ENCODE measurements at regions of chr20 and their contacts with region 1.

Region 1: GRCh38 chr20:25539742-25540672 is 45.3 kb downstream of the NINL start:
- DNase-seq: no peak
- H3K4me3 ChIP-seq: peak overlapping the region; percentile 15 to 47 (median 39)
- H3K27ac ChIP-seq: peak overlapping the region; percentile 32 to 76 (median 72)
- H3K4me1 ChIP-seq: peaks cover 0 to 39% (median 20%) of the 10 kb centered on the region in 4 donors
- H3K27me3 ChIP-seq: no peaks in the 10 kb centered on the region
- CTCF ChIP-seq: peak in 3 of 4 experiments; percentile 27 to 48 (median 37)
- EP300 ChIP-seq: no peak
- POLR2A ChIP-seq: no peak

Region 2: GRCh38 chr20:25683052-25683451 is 143.0 kb after region 1 on chr20:
- intact Hi-C with region 1: no loop called
- DNase-seq: no peak
- H3K4me3 ChIP-seq: no peak overlapping the region
- H3K27ac ChIP-seq: no peak overlapping the region
- H3K4me1 ChIP-seq: no peaks in the 10 kb centered on the region
- H3K27me3 ChIP-seq: no peaks in the 10 kb centered on the region
- CTCF ChIP-seq: no peak
- EP300 ChIP-seq: no peak
- POLR2A ChIP-seq: no peak

Region 3: GRCh38 chr20:25696384-25697131 is 156.6 kb after region 1 on chr20 and contains the start of gene ZNF337:
- intact Hi-C with region 1: loop called (anchors 10 kb)
- DNase-seq: peak; percentile 97
- H3K4me3 ChIP-seq: peak within 1 kb of the TSS; percentile 67 to 95 (median 88)
- H3K27ac ChIP-seq: peak within 1 kb of the TSS; percentile 89 to 93 (median 92)
- H3K4me1 ChIP-seq: peaks cover 0 to 19% (median 13%) of the 10 kb centered on the region in 4 donors
- H3K27me3 ChIP-seq: no peaks in the 10 kb centered on the region
- CTCF ChIP-seq: no peak
- EP300 ChIP-seq: no peak
- POLR2A ChIP-seq: peak; percentile 59 to 66
- total RNA-seq, gene ZNF337: 15.6 to 18.6 (median 17.2) TPM

Measured in sigmoid colon (tissue), 7 donors.